ENCODE measurements at regions of chr7 and their contacts with region 1.

Region 1: DNA sequence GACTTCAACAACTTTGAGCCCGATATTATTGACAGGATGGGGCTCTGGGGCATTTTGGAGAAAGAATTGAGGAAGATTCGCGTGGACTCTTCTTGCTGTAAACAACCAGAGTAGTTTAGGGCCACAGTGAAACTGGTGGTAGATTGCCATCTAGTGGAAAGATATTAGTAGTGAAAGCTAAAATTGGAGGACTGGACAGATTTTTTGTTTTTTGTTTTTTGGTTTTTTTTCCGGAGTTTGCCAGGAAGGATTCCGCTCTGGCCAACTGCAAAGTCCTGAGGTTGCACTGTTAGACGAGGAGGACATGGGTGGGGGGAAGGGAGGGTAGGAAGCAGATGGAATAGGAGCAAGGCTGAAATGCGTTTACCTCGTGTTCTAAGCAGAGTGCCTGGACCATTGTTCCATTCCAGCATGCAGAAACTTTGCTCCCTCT is 11.7 kb downstream of the NOBOX start:
- DNase-seq: peak in 1 of 2 experiments; percentile 16
- H3K4me3 ChIP-seq: peak overlapping the region; percentile 18; the same call in 1 of the 2 replicates
- H3K27ac ChIP-seq: no peak overlapping the region
- H3K4me1 ChIP-seq: no peaks in the 10 kb centered on the region
- H3K27me3 ChIP-seq: peaks cover 25% of the 10 kb centered on the region; the same call in 1 of the 2 replicates
- CTCF ChIP-seq: peak; percentile 85

Region 2: DNA sequence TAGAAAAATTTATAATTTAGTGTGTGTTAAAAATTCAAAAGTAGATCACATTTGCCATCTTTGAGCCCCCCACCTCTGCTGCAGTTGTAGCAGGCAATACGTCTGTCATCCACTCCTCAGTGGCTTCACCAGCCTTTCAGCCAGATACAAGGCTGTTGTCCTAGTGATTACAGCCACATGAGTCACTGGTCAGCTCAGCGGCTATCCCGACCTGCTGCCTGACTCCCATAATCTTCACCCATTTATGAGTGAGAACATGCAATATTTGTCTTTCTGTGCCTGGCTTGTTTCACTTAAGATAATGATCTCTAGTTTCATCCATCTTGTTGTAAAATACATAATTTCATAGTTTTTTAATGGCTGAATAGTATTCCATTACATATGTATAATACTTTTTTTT is 333.9 kb before region 1 on chr7:
- CTCF ChIA-PET with region 1: no interaction called
- POLR2A ChIA-PET with region 1: no interaction called
- intact Hi-C with region 1: loop called (anchors 5 kb)
- DNase-seq: no peak
- H3K4me3 ChIP-seq: no peak overlapping the region
- H3K27ac ChIP-seq: no peak overlapping the region
- H3K4me1 ChIP-seq: no peaks in the 10 kb centered on the region
- H3K27me3 ChIP-seq: no peaks in the 10 kb centered on the region
- CTCF ChIP-seq: no peak

Region 3: DNA sequence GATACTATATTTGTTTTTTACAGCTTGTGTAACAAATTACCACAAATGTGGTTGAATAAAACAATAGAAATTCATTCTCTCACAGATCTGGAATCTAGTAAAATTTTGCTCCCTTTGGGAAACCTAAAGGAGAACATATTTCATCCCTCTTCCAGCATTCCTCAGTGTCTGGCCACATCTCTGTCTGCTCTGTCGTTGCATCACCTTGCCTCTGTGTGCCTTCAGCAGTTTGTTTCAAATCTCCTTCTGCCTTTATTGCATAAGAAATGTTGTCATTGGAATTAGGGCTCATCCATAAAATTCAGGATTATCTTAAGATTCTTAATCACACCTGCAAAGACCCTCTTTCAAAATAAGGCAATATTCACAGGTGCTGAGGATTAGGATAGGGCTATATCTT is 254.3 kb before region 1 on chr7:
- CTCF ChIA-PET with region 1: no interaction called
- POLR2A ChIA-PET with region 1: no interaction called
- intact Hi-C with region 1: loop called (anchors 5 kb)
- DNase-seq: no peak
- H3K4me3 ChIP-seq: no peak overlapping the region
- H3K27ac ChIP-seq: no peak overlapping the region
- H3K4me1 ChIP-seq: no peaks in the 10 kb centered on the region
- H3K27me3 ChIP-seq: no peaks in the 10 kb centered on the region
- CTCF ChIP-seq: no peak

Region 4: DNA sequence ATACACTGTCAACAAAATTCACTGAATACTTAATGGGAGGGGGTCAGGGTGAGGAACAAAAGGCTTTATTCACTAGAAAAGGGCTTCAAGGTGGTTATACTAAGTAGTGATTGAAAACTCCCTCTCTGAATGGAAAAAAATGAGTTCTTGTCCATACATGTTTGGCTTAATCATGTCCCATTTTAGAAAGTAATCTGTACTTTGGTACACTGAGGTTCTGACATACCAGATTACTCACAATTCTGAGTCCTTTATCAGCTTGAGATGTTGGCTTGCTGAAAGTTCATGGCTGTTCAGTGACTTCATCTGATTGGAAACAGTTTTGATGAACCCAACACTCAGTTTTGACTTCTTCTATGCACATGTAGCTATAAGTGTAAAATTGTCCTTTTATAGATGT is 24.5 kb after region 1 on chr7:
- CTCF ChIA-PET with region 1: no interaction called
- POLR2A ChIA-PET with region 1: no interaction called
- intact Hi-C with region 1: no loop called
- DNase-seq: no peak
- H3K4me3 ChIP-seq: no peak overlapping the region
- H3K27ac ChIP-seq: no peak overlapping the region
- H3K4me1 ChIP-seq: peaks cover 9% of the 10 kb centered on the region; the same call in 1 of the 2 replicates
- H3K27me3 ChIP-seq: no peaks in the 10 kb centered on the region
- CTCF ChIP-seq: no peak

Region 5: DNA sequence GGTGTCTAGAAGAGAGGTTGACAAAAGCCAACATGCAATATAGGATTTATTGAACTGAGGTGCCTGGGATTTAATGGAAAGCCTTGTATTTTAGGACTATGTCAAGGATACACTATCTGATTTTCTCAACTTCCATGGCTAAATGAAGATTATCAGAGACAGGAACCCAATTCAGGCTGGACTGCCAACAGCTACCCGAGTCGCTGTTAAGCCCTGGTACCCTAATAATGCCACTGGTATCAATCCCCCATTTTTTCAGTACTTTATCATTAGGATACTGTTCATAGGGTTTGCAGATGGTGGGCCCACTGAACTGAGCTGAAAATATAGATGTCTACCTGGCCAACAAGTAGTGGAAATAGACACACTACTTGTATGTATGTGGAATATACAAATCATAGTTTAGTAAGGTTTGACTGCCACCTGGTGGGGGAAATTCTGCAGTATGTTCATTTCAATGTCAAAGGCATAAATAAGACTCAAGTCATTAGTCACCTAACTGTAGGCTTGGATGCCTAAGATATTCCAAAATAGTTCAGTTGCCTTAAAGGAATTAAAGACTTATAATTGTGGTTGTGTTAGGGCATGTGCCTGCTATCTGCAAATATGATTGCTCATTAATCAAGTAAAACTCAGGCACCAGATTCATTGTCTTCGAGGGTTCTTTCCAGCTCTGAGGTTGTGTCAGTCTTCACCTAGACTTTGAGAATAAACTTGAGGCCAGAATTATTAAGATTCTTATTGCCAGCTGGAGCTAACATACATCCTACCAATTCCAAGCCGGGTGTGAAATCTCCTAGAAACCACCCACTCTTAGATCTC is 45.7 kb after region 1 on chr7:
- CTCF ChIA-PET with region 1: interaction called, 5 read pairs
- POLR2A ChIA-PET with region 1: no interaction called
- intact Hi-C with region 1: loop called (anchors 1 kb)
- DNase-seq: peak; percentile 61 to 70
- H3K4me3 ChIP-seq: no peak overlapping the region
- H3K27ac ChIP-seq: no peak overlapping the region
- H3K4me1 ChIP-seq: no peaks in the 10 kb centered on the region
- H3K27me3 ChIP-seq: no peaks in the 10 kb centered on the region
- CTCF ChIP-seq: peak; percentile 88